Dendritic cell treated with granulocyte-macrophage colony-stimulating factor and Interleukin-4, amounts not matched to agents 40 ng/mL and 50 ng/mL, for 4 days (primary cell): ENCODE measurements at regions of chr9 and their contacts with region 1.

Region 1: GRCh38 chr9:86298873-86299272 is 16.5 kb upstream of the ISCA1 start:
- H3K4me3 Mint-ChIP-seq: no peak overlapping the region
- H3K27ac Mint-ChIP-seq: peak overlapping the region; percentile 22
- H3K4me1 Mint-ChIP-seq: peaks cover 6% of the 10 kb centered on the region
- H3K27me3 Mint-ChIP-seq: no peaks in the 10 kb centered on the region

Region 2: DNA sequence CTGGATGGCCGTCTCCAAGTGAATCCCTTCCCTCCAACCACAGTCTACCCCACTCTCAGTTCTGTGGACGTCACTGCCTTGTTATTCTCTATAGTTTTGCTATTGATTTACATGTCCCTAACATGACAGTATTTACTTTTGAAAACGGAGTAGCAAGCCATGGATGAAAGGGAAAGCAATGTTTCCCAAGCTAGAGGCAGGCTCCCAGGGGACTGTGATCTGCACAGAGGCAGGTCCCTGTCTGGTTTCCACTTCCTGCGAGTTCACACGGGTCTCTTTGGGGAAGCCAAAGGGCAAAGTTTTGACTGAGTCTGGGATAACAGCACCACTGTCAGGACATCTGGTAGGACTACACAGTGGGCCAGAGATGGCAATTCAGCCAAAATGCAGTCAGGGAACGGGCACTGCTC is 52.1 kb before region 1 on chr9:
- intact Hi-C with region 1: no loop called
- H3K4me3 Mint-ChIP-seq: no peak overlapping the region
- H3K27ac Mint-ChIP-seq: no peak overlapping the region
- H3K4me1 Mint-ChIP-seq: peaks cover 5% of the 10 kb centered on the region
- H3K27me3 Mint-ChIP-seq: no peaks in the 10 kb centered on the region

Region 3: GRCh38 chr9:86329649-86330048 is 30.8 kb after region 1 on chr9:
- intact Hi-C with region 1: loop called (anchors 5 kb)
- H3K4me3 Mint-ChIP-seq: no peak overlapping the region
- H3K27ac Mint-ChIP-seq: no peak overlapping the region
- H3K4me1 Mint-ChIP-seq: peaks cover 5% of the 10 kb centered on the region
- H3K27me3 Mint-ChIP-seq: no peaks in the 10 kb centered on the region

Region 4: DNA sequence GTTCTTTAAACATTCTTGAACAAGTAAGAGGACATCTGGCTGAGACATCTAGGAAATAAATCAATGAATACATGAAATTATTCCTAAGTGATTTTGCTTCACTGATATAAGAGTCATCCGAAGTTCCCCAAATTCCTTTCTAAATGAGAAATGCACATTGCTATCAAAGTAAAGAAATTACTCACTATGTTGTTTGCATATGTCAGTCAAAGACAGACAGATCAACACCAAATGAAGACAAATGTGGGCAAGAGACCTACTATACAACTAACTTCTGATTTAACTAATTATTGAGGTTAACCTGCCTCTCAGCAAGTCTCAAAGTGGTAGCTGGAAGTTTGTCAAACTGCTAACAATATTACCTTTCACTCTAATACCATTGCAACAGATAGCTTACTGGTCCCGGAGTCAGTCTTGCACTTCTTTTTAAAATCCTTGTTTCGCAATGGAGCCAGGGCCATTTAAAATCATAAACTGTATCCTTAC is 42.2 kb after region 1 on chr9:
- intact Hi-C with region 1: no loop called
- H3K4me3 Mint-ChIP-seq: no peak overlapping the region
- H3K27ac Mint-ChIP-seq: peak overlapping the region; percentile 20
- H3K4me1 Mint-ChIP-seq: peaks cover 29% of the 10 kb centered on the region
- H3K27me3 Mint-ChIP-seq: no peaks in the 10 kb centered on the region